Left cardiac atrium (tissue), 4 donors: ENCODE measurements at regions of chr17 and their contacts with region 1.

Region 1: GRCh38 chr17:50094753-50095619 is at the start of gene PDK2:
- DNase-seq: peak; percentile 97
- ATAC-seq: peak; percentile 93 to 95
- total RNA-seq, gene PDK2: 156 to 203 TPM

Region 2: GRCh38 chr17:50026901-50027630 is 67.9 kb before region 1 on chr17:
- intact Hi-C with region 1: loop called in 1 of 2 experiments (anchors 2 kb)
- DNase-seq: peak; percentile 83
- ATAC-seq: peak; percentile 81 to 83

Region 3: DNA sequence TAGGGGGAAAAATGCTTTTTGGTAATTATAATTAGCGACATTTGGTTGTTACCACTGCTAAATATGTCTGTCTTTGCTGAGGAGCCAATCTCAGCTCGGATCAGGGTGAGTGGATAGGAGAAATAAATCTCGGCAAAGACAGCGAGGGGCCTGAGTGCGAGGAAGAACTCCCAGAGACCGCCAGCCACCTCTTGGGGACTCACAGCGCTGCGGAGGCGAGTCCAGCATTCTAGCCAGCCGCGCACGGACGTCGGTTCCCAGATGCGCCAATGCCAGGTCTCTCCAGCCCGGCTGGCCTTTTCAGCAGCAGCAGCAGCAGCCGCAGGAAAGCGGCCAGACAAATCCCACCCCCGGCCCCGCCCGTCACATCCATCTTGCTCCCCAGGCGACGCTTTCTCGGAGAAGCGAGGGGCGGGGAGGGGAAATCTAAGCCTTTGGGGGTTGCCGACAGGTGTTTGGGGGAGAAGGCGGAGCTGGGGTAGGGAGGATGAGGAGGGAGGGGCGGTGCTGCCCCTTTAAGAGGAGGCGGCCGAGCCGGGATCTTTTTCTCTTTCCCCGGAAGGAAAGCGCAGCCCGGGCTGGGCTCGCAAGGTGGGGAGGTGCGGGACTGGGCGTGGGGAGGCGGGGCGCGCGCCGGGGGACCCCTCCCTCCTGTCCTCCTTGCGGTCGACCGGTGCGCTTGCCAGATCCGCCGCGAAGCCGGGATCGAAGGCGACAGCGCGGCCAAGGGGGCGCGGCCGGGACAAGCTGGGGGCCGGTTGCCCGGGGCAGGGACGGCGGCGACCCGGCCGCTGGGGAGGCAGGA is 39.4 kb before region 1 on chr17 and contains the start of gene ITGA3:
- intact Hi-C with region 1: loop called in 1 of 2 experiments (anchors 5 kb)
- DNase-seq: peak; percentile 86
- ATAC-seq: peak; percentile 74 to 79
- total RNA-seq, gene ITGA3: 26.5 to 35.9 TPM

Region 4: GRCh38 chr17:50297407-50297865 is 202.4 kb after region 1 on chr17:
- intact Hi-C with region 1: loop called in 1 of 2 experiments (anchors 5 kb)
- DNase-seq: peak; percentile 81
- ATAC-seq: peak; percentile 93 to 95

Region 5: DNA sequence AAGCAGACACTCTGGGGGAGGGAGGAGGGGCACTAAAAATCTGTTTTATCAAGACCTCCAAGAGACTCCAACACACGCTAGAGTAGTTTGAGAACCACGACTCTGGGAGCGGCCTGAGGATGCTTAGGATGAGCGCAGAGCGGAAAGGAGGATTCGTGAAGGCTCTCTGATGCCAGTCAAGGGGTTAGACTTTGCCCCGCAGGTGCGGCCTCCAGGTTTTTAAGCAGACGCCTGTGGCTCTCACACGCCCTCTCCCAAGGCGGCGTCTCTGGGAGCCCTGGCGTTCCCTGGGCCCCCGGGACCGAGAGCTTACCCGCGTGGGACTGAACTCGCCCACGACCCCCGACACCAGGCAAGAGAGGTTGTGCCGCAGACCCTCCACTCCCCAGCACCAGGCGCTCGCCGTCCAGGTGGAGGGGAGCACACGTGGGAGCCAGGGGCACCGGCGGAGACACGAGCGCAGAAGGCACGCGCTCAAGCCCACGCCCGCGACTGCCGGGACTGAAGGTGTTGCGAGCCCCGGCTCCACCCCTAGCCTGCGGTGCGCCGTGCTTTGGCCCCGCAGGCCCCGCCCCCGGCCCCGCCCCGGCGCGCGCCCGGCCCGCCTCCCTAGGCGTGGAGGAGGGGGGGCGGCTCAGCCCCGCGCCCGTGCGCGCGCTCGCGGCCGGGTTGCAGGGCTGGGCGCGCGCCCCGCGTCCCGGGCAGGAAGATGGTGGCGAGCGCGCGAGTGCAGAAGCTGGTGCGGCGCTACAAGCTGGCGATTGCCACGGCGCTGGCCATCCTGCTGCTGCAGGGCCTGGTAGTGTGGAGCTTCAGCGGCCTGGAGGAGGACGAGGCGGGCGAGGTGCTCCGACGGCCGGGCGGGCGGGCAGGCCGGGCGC is 250.7 kb after region 1 on chr17 and contains the start of gene XYLT2:
- intact Hi-C with region 1: no loop called
- DNase-seq: peak; percentile 89
- ATAC-seq: peak; percentile 96 to 98
- total RNA-seq, gene XYLT2: 13.6 to 17.3 TPM